ENCODE measurements at regions of chr4 and their contacts with region 1.

Region 1: GRCh38 chr4:89226665-89227574 is 80.7 kb downstream of the GPRIN3 start:
- DNase-seq: peak; percentile 45 to 75 (median 62)
- H3K4me3 ChIP-seq: no peak overlapping the region
- H3K4me3 Mint-ChIP-seq: peak overlapping the region in 1 of 2 donors; percentile 42
- H3K27ac ChIP-seq: no peak overlapping the region
- H3K27ac Mint-ChIP-seq: peak overlapping the region in 1 of 7 donors; percentile 20
- H3K4me1 ChIP-seq: no peaks in the 10 kb centered on the region
- H3K4me1 Mint-ChIP-seq: peaks cover 4% of the 10 kb centered on the region
- H3K27me3 ChIP-seq: no peaks in the 10 kb centered on the region
- H3K27me3 Mint-ChIP-seq: peaks cover 0 to 2% (median 0%) of the 10 kb centered on the region in 3 donors
- CTCF ChIP-seq: peak; percentile 86

Region 2: GRCh38 chr4:89434364-89434988 is 207.6 kb after region 1 on chr4:
- intact Hi-C with region 1: loop called (anchors 5 kb)
- DNase-seq: peak; percentile 7 to 39 (median 29)
- H3K4me3 ChIP-seq: no peak overlapping the region
- H3K4me3 Mint-ChIP-seq: no peak overlapping the region
- H3K27ac ChIP-seq: no peak overlapping the region
- H3K27ac Mint-ChIP-seq: no peak overlapping the region
- H3K4me1 ChIP-seq: peaks cover 0 to 8% of the 10 kb centered on the region in 2 donors
- H3K4me1 Mint-ChIP-seq: peaks cover 13% of the 10 kb centered on the region
- H3K27me3 ChIP-seq: no peaks in the 10 kb centered on the region
- H3K27me3 Mint-ChIP-seq: peaks cover 0 to 2% (median 0%) of the 10 kb centered on the region in 3 donors
- CTCF ChIP-seq: peak; percentile 80

Region 3: DNA sequence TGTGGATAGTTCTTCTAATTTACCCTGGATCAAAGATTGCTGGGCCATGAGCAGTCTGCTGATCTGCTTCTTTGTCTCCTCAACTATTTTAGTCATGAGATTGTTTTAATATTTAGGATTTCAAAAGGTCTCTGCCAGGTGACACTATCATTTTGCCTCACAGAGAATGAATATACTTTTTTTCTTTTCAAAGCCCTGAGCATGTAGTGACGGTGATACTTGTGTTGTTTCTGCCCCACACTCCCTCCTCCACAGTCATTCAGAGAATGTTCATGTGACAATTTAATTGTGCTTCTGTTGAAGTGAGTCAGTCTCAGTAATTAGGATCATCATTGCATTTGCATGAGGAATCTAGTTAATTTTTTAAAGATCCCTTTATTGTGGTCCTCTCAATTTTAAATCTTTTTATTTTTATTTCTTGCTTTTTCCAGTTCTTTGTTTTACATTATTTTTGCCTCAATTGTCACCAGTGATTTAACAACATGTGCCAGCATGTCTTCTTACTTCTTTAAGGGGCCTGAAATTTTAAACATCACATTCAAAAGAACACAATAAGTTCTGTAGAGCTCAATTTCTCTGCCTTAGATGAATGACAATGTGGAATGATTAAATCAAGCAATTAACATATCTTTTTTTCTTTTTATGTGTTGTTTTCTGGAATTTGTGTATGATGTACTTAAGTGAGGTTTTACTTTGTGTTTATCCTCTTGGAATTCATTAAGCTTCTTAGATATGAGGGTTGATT is 680.0 kb after region 1 on chr4:
- intact Hi-C with region 1: loop called in 1 of 2 experiments (anchors 10 kb)
- DNase-seq: no peak
- H3K4me3 ChIP-seq: no peak overlapping the region
- H3K4me3 Mint-ChIP-seq: no peak overlapping the region
- H3K27ac ChIP-seq: no peak overlapping the region
- H3K27ac Mint-ChIP-seq: no peak overlapping the region
- H3K4me1 ChIP-seq: no peaks in the 10 kb centered on the region
- H3K4me1 Mint-ChIP-seq: no peaks in the 10 kb centered on the region
- H3K27me3 ChIP-seq: no peaks in the 10 kb centered on the region
- H3K27me3 Mint-ChIP-seq: no peaks in the 10 kb centered on the region
- CTCF ChIP-seq: no peak

Measured in CD14-positive monocyte (primary cell).